CD8-positive, alpha-beta T cell (primary cell): ENCODE measurements at regions of chr10 and their contacts with region 1.

Region 1: GRCh38 chr10:46284293-46285229 is 2.2 kb upstream of the ANTXRL start:
- DNase-seq: peak; percentile 42 to 86 (median 73)
- ATAC-seq: peak; percentile 72
- H3K4me3 ChIP-seq: peak overlapping the region; percentile 58 to 67
- H3K4me3 Mint-ChIP-seq: peak overlapping the region; percentile 92
- H3K27ac ChIP-seq: peak overlapping the region in 1 of 2 experiments; percentile 26
- H3K27ac Mint-ChIP-seq: peak overlapping the region; percentile 27
- H3K4me1 ChIP-seq: peaks cover 10% of the 10 kb centered on the region
- H3K4me1 Mint-ChIP-seq: peaks cover 18% of the 10 kb centered on the region
- H3K27me3 ChIP-seq: no peaks in the 10 kb centered on the region
- H3K27me3 Mint-ChIP-seq: no peaks in the 10 kb centered on the region
- CTCF ChIP-seq: no peak

Region 2: GRCh38 chr10:44990302-44990655 is 1294.3 kb before region 1 on chr10:
- CTCF ChIA-PET with region 1: no interaction called
- POLR2A ChIA-PET with region 1: no interaction called
- intact Hi-C with region 1: loop called in 1 of 2 experiments (anchors 10 kb)
- DNase-seq: peak in 2 of 9 experiments; percentile 7 to 15
- ATAC-seq: no peak
- H3K4me3 ChIP-seq: no peak overlapping the region
- H3K4me3 Mint-ChIP-seq: no peak overlapping the region
- H3K27ac ChIP-seq: no peak overlapping the region
- H3K27ac Mint-ChIP-seq: no peak overlapping the region
- H3K4me1 ChIP-seq: peaks cover 9% of the 10 kb centered on the region
- H3K4me1 Mint-ChIP-seq: peaks cover 7% of the 10 kb centered on the region
- H3K27me3 ChIP-seq: no peaks in the 10 kb centered on the region
- H3K27me3 Mint-ChIP-seq: peaks cover 6% of the 10 kb centered on the region
- CTCF ChIP-seq: no peak

Region 3: GRCh38 chr10:45646384-45647050 is 638.0 kb before region 1 on chr10:
- CTCF ChIA-PET with region 1: no interaction called
- POLR2A ChIA-PET with region 1: no interaction called
- intact Hi-C with region 1: no loop called
- DNase-seq: no peak
- ATAC-seq: no peak
- H3K4me3 ChIP-seq: no peak overlapping the region
- H3K4me3 Mint-ChIP-seq: no peak overlapping the region
- H3K27ac ChIP-seq: no peak overlapping the region
- H3K27ac Mint-ChIP-seq: peak overlapping the region; percentile 35
- H3K4me1 ChIP-seq: no peaks in the 10 kb centered on the region
- H3K4me1 Mint-ChIP-seq: no peaks in the 10 kb centered on the region
- H3K27me3 ChIP-seq: no peaks in the 10 kb centered on the region
- H3K27me3 Mint-ChIP-seq: no peaks in the 10 kb centered on the region
- CTCF ChIP-seq: no peak

Region 4: DNA sequence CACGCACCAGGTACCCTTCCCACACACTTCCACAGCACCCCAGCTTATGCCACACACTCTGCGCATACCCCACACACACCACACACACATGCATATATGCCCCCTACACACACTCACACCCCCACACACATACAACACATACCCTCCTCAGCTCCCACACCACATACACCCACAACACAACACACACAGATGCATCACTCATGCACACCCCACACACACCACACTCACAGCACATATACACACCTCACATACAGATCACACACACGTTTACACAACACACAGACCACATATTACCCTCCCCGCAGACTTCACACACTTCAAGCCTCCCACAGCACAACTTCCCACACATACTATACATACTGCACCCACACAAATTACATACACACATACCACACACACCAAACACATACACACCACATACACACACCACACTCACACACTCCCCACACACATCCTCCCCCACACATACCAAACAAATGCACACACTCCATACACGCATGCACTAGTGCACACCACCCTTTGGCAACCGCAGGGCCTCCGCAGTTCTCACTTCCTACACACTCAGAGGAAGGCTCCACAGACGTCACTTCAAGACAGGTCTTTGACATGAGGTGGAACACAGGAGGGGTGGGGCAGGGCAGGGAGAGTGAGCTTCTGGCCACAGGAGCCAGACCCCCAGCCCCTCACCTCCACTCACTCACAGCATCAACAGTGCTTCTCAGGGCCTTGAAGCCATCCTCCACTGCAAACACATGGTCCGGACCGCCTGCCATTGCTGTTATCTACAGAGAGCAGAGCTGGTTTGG is 16.3 kb before region 1 on chr10:
- CTCF ChIA-PET with region 1: interaction called, 5 read pairs
- POLR2A ChIA-PET with region 1: interaction called, 18 read pairs
- intact Hi-C with region 1: loop called in 1 of 2 experiments (anchors 1 kb)
- DNase-seq: peak; percentile 35 to 81 (median 63)
- ATAC-seq: peak; percentile 72
- H3K4me3 ChIP-seq: peak overlapping the region; percentile 76
- H3K4me3 Mint-ChIP-seq: no peak overlapping the region
- H3K27ac ChIP-seq: peak overlapping the region; percentile 79 to 86
- H3K27ac Mint-ChIP-seq: no peak overlapping the region
- H3K4me1 ChIP-seq: peaks cover 59% of the 10 kb centered on the region
- H3K4me1 Mint-ChIP-seq: peaks cover 54% of the 10 kb centered on the region
- H3K27me3 ChIP-seq: no peaks in the 10 kb centered on the region
- H3K27me3 Mint-ChIP-seq: no peaks in the 10 kb centered on the region
- CTCF ChIP-seq: no peak